ENCODE measurements at regions of chr11 and their contacts with region 1.

Region 1: GRCh38 chr11:35617687-35618496 is at the start of gene FJX1:
- DNase-seq: peak; percentile 70
- ATAC-seq: peak; percentile 74
- total RNA-seq, gene FJX1: 1.2 TPM

Region 2: DNA sequence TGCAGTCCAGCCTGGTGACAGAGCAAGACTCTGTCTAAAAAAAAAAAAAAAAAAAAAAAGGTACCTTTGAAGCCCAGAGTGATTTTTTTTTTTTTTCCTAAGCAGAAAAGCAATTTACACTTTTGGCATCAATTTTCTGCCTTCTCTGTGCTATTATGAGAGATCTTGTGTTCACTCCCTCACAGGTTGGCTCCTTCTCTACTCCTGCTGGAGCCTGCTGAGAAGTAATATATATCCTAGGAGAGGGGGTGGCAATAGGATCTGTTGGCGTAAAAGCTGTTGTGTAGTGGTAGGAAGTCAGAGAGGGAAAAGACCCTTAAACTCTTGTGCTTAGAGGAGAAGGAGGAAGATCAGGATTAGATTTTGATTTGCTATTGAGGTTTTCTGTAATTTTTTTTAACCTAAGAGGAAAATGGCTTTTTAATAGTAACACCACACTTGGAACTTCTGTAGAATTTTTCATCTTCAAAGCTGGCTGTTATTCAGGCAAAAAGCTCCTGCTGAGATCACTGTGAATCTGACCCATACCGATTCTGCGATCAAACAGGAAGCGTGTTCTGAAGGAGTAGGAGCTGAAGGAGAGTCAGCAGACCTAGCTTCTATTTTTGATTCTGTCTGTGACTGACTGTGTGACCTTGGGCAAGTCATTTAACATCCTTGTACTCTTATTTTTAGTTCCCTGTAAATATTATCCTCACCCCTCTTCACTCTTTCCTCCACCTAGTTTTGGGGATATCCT is 122.3 kb after region 1 on chr11:
- intact Hi-C with region 1: no loop called
- DNase-seq: no peak
- ATAC-seq: no peak

Region 3: GRCh38 chr11:35815556-35816315 is 197.8 kb after region 1 on chr11:
- intact Hi-C with region 1: loop called (anchors 10 kb)
- DNase-seq: no peak
- ATAC-seq: peak; percentile 83

Region 4: GRCh38 chr11:36131721-36132397 is 514.0 kb after region 1 on chr11:
- intact Hi-C with region 1: loop called (anchors 10 kb)
- DNase-seq: peak; percentile 44
- ATAC-seq: peak; percentile 85

Region 5: GRCh38 chr11:36265793-36266628 is 648.1 kb after region 1 on chr11:
- intact Hi-C with region 1: loop called (anchors 10 kb)
- DNase-seq: peak; percentile 68
- ATAC-seq: peak; percentile 71

Region 6: GRCh38 chr11:36478700-36479329 is 860.9 kb after region 1 on chr11:
- intact Hi-C with region 1: loop called (anchors 10 kb)
- DNase-seq: no peak
- ATAC-seq: peak; percentile 74